Activated CD4-positive, alpha-beta memory T cell treated with anti-CD3 and anti-CD28 coated beads for 36 hours (primary cell): ENCODE measurements at regions of chr12 and their contacts with region 1.

Region 1: DNA sequence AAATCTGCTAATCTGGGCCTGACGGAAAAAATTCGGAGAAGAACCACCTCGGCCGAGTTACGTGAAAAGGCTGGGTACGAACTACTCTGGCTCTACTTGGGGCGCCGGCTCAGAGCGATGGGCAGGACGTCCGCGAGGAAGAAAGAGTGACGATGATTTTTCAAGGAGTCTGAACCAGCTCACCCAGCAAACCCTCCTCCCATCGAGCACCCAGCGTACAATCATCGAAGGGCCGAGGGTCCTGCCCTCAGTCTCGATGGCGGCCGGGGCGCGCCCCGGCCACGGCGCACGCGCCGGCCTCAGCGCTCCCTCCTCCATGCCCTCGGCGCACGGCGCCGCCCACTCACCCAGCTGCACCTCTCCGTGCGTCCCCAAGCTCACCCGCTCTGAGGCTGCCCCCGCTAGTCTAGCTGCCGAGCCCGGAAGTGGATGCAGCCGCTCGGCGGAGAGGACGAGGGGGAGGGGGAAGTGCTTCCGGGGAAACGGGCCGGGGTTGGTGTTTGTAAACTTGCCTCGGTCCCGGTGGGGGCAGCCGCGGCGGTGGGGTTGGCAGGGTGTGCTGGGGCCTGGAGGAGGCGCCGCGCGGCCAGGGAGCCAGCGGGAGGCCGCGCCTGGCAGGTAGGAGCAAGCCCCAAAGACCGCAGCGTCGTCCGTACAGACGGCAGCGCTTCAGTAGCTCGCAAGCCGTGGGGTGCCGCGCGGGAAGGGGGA is at the starts of genes CSAD and ZNF740:
- DNase-seq: peak; percentile 99
- H3K4me3 Mint-ChIP-seq: peak within 1 kb of the TSS; percentile 96
- H3K27ac Mint-ChIP-seq: peak within 1 kb of the TSS; percentile 94
- H3K4me1 Mint-ChIP-seq: peaks cover 47% of the 10 kb centered on the region
- H3K27me3 Mint-ChIP-seq: no peaks in the 10 kb centered on the region
- total RNA-seq, gene CSAD: 21.4 to 23.7 TPM
- total RNA-seq, gene ZNF740: 32.6 to 37.5 TPM

Region 2: DNA sequence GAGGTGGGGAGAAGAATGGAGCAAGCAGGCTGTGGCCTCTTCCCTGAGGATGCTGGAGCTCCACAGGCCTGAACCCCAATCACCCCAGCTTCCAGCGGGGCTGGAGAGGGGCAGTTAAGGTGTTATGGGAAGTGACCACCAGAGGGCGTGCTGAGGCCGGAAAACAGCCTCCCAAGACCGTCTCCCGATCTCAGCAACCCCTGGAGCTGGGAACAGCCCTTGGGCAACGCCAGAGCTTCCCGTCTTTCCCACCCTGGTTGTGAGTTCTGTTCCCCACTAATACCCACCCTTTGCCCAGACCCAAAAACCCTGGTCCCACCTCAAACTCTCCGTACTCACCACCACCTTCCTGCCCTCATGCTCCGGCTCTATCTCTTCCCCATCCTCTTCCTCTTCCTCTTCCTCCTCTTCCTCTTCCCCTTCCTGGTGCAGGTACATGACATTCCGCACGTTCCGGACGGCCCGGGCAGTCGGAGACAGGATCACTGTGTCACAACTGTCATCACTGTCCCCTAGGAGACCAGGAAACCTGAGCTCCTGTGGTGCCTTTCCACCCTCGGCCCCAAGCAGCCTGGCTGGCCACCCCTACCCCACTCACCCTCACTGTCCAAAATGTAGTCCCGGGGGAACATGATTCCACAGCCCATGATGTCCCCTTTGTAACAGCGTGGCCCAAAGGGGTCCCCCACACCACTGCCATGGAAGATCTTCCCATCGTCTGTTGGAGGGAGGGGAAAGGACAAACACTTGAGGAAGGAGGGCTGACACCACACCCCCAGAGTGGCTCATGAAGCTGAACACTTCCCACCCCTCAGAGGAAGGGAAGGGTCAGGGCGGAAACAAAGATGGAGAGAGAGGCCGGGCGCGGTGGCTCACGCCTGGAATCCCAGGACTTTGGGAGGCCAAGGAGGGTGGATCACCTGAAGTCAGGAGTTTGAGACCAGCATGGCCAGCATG is 114.1 kb before region 1 on chr12:
- CTCF ChIA-PET with region 1: interaction called, 14 read pairs
- POLR2A ChIA-PET with region 1: no interaction called
- intact Hi-C with region 1: no loop called
- DNase-seq: peak; percentile 76
- H3K4me3 Mint-ChIP-seq: no peak overlapping the region
- H3K27ac Mint-ChIP-seq: no peak overlapping the region
- H3K4me1 Mint-ChIP-seq: peaks cover 8% of the 10 kb centered on the region
- H3K27me3 Mint-ChIP-seq: no peaks in the 10 kb centered on the region

Region 3: DNA sequence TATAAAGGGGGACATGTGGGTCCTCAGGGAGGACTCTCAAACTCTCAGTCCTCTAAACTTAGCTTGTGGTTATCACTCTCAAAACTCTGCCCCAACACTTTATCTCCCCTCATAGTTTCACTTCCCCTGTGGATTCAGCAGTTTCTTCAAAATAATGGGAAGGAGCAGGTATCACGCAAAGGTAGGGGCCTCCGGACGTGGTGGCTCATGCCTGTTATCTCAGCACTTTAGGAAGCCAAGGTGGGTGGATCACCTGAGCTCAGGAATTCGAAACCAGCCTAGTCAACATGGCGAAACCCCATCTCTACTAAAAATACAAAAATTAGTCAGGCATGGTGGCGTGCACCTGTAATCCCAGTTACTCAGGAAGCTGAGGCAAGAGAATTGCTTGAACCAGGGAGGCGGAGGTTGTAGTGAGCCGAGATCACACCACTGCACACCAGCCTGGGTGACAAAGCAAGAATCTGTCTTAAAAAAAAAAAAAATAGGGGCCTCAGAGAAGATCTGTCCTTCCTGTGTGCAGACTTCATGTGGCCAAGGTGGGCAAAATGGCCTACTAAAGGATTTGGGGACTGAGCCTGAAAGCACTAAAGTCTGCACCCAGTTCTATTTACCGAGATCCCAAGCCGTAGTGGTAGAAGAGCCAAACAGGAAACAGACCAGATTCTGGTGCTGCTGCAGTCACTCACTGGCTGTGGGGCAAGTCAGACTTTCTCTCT is 20.2 kb after region 1 on chr12:
- CTCF ChIA-PET with region 1: interaction called, 30 read pairs
- POLR2A ChIA-PET with region 1: interaction called, 19 read pairs
- intact Hi-C with region 1: loop called (anchors 1 kb)
- DNase-seq: peak; percentile 77
- H3K4me3 Mint-ChIP-seq: peak overlapping the region; percentile 45
- H3K27ac Mint-ChIP-seq: peak overlapping the region; percentile 88
- H3K4me1 Mint-ChIP-seq: peaks cover 72% of the 10 kb centered on the region
- H3K27me3 Mint-ChIP-seq: no peaks in the 10 kb centered on the region

Region 4: GRCh38 chr12:53220801-53221202 is 40.4 kb after region 1 on chr12:
- CTCF ChIA-PET with region 1: interaction called, 12 read pairs
- POLR2A ChIA-PET with region 1: interaction called, 19 read pairs
- intact Hi-C with region 1: loop called (anchors 1 kb)
- DNase-seq: peak; percentile 92
- H3K4me3 Mint-ChIP-seq: peak overlapping the region; percentile 80
- H3K27ac Mint-ChIP-seq: peak overlapping the region; percentile 93
- H3K4me1 Mint-ChIP-seq: peaks cover 74% of the 10 kb centered on the region
- H3K27me3 Mint-ChIP-seq: no peaks in the 10 kb centered on the region

Region 5: DNA sequence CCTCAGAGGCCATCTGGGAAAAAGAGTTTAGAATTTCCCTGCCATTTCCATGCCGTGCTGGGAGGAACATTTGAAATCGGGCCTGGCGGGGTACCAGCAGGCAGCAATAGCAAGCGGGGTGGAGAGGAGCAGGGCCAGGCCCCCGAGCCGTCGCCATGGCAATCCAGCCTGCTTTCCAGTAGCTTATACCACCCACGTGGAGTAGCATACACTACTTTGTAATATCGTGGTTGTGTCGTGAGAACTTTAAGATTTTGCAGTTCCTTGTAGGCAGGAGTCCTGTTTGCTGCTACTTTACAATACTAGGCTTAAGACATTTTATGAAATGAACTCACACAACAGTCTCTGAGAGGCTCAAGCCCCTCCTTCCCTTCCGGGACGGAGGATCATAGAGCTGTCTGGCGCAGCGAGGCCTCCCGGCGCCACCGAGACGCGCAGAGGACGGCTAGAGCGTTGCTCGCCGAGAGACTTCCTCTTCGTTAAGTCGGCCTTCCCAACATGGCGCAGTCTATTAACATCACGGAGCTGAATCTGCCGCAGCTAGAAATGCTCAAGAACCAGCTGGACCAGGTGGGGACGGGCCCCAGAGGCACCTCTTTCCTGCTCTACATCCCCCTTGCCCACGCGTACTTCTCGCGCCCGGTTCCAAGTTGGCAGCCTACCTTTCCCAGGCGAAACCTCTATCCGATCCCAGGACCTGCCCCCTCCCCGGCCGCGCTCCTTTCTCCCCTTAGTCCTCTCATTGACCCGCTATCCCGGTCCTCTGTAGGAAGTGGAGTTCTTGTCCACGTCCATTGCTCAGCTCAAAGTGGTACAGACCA is 114.9 kb after region 1 on chr12 and contains the start of gene PFDN5:
- CTCF ChIA-PET with region 1: interaction called, 5 read pairs
- POLR2A ChIA-PET with region 1: interaction called, 5 read pairs
- intact Hi-C with region 1: loop called (anchors 1 kb)
- DNase-seq: peak; percentile 92
- H3K4me3 Mint-ChIP-seq: peak within 1 kb of the TSS; percentile 99
- H3K27ac Mint-ChIP-seq: peak within 1 kb of the TSS; percentile 94
- H3K4me1 Mint-ChIP-seq: peaks cover 53% of the 10 kb centered on the region
- H3K27me3 Mint-ChIP-seq: no peaks in the 10 kb centered on the region
- total RNA-seq, gene PFDN5: 354 to 359 TPM

Region 6: GRCh38 chr12:53441040-53441833 is 260.9 kb after region 1 on chr12 and contains the start of gene PRR13:
- CTCF ChIA-PET with region 1: no interaction called
- POLR2A ChIA-PET with region 1: no interaction called
- intact Hi-C with region 1: loop called (anchors 1 kb)
- DNase-seq: peak; percentile 100
- H3K4me3 Mint-ChIP-seq: peak within 1 kb of the TSS; percentile 97
- H3K27ac Mint-ChIP-seq: peak within 1 kb of the TSS; percentile 93
- H3K4me1 Mint-ChIP-seq: peaks cover 37% of the 10 kb centered on the region
- H3K27me3 Mint-ChIP-seq: no peaks in the 10 kb centered on the region
- total RNA-seq, gene PRR13: 218 to 221 TPM